ENCODE measurements at regions of chr6 and their contacts with region 1.

Region 1: GRCh38 chr6:25992413-25993037 is 29.9 kb downstream of the TRIM38 start:
- DNase-seq: peak; percentile 96
- ATAC-seq: peak; percentile 96
- H3K4me3 Mint-ChIP-seq: peak overlapping the region; percentile 91
- H3K27ac Mint-ChIP-seq: peak overlapping the region; percentile 97
- H3K4me1 Mint-ChIP-seq: peaks cover 25% of the 10 kb centered on the region
- H3K27me3 Mint-ChIP-seq: no peaks in the 10 kb centered on the region
- CTCF ChIP-seq: peak; percentile 98

Region 2: GRCh38 chr6:25899123-25899522 is 93.4 kb before region 1 on chr6:
- CTCF ChIA-PET with region 1: interaction called, 10 read pairs
- POLR2A ChIA-PET with region 1: no interaction called
- intact Hi-C with region 1: no loop called
- DNase-seq: no peak
- ATAC-seq: no peak
- H3K4me3 Mint-ChIP-seq: no peak overlapping the region
- H3K27ac Mint-ChIP-seq: no peak overlapping the region
- H3K4me1 Mint-ChIP-seq: peaks cover 2% of the 10 kb centered on the region
- H3K27me3 Mint-ChIP-seq: peaks cover 5% of the 10 kb centered on the region
- CTCF ChIP-seq: no peak

Region 3: DNA sequence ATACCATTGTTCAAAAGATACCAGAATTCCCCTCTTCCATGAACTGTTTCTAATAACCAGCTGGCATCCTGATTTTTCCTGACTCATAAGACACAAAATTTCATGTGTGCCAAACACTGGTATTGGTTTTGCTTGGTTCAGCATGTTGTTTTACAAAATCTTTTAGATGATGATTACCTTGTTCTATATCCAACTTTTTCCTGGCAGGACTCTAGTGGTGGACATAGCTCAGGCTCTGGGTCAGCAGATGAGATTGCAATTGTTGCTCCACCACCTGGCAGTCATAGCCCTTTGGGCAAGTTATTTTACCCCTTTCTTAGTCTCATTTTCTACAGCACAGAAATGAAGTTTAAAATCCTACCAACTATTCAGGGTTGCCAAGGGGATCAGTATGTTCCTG is 23.8 kb before region 1 on chr6:
- CTCF ChIA-PET with region 1: interaction called, 29 read pairs
- POLR2A ChIA-PET with region 1: interaction called, 10 read pairs
- intact Hi-C with region 1: no loop called
- DNase-seq: no peak
- ATAC-seq: no peak
- H3K4me3 Mint-ChIP-seq: no peak overlapping the region
- H3K27ac Mint-ChIP-seq: peak overlapping the region; percentile 36
- H3K4me1 Mint-ChIP-seq: peaks cover 61% of the 10 kb centered on the region
- H3K27me3 Mint-ChIP-seq: no peaks in the 10 kb centered on the region
- CTCF ChIP-seq: no peak

Region 4: GRCh38 chr6:25981568-25982263 is 10.8 kb before region 1 on chr6:
- CTCF ChIA-PET with region 1: interaction called, 20 read pairs
- POLR2A ChIA-PET with region 1: interaction called, 14 read pairs
- intact Hi-C with region 1: no loop called
- DNase-seq: no peak
- ATAC-seq: no peak
- H3K4me3 Mint-ChIP-seq: no peak overlapping the region
- H3K27ac Mint-ChIP-seq: peak overlapping the region; percentile 28
- H3K4me1 Mint-ChIP-seq: peaks cover 18% of the 10 kb centered on the region
- H3K27me3 Mint-ChIP-seq: no peaks in the 10 kb centered on the region
- CTCF ChIP-seq: no peak

Region 5: DNA sequence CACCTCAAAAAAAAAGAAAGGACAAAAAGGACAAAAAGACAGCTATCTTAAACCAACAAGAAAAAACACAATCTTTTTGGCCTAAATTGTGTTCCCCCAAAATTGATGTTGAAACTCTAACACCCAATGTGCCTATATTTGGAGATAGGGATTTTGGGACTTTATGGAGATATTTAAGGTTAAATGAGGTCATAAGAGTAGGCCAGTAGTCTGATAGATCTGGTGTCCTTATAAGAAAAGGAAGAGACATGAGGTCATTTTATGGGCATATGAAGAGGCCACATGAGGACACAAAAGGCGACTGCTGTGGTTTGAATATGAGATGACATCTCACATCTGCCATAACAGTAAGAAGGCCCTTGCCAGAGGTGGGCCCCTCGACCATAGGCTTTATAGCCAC is 19.5 kb after region 1 on chr6:
- CTCF ChIA-PET with region 1: interaction called, 118 read pairs
- POLR2A ChIA-PET with region 1: interaction called, 95 read pairs
- intact Hi-C with region 1: no loop called
- DNase-seq: no peak
- ATAC-seq: no peak
- H3K4me3 Mint-ChIP-seq: no peak overlapping the region
- H3K27ac Mint-ChIP-seq: no peak overlapping the region
- H3K4me1 Mint-ChIP-seq: peaks cover 4% of the 10 kb centered on the region
- H3K27me3 Mint-ChIP-seq: no peaks in the 10 kb centered on the region
- CTCF ChIP-seq: no peak

Region 6: DNA sequence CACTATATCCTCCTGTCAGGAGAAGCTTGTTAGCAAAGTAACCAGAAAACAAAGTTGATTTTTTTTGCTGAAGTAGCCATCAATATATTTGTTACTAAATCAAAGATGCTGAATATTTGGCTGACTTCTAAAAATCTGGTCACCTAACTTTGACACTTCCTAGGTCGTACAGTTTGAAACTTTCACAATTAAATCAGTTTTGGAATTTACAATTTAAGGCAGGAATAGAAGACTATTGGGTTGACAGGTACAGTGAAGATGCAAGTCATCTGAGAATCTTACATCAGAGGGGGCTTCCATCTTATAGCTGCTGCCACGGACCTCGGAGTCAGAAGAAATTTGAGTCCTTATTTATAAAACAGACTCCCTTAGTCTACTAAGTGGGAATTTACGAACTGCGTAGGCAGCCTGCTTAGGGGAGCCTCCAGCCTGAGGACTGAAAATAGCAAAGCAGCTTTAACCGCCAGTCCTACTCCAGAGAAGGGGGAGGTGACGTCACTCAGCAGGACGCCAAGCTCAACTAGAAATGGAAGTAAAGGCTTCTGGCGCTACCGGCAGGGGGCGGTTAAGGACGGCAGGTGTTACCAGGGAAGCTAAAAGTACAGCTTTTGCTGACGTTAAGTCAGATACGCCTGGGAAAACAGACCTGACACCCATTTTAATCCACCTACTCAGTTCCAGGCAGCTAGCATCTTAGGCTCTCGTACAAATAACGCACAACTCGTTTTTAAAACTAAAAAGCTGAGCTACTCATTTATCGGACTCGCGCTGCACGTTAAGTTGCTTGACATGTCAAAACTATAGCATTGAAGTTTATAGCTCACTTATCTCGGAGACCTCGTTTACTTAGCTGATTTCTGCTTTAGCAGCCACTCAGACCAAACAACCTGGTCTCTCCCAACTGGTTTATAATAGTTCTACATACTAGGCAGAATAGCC is 33.6 kb after region 1 on chr6:
- CTCF ChIA-PET with region 1: interaction called, 25 read pairs
- POLR2A ChIA-PET with region 1: interaction called, 95 read pairs
- intact Hi-C with region 1: no loop called
- DNase-seq: peak; percentile 97
- ATAC-seq: peak; percentile 41
- H3K4me3 Mint-ChIP-seq: peak overlapping the region; percentile 77
- H3K27ac Mint-ChIP-seq: peak overlapping the region; percentile 95
- H3K4me1 Mint-ChIP-seq: peaks cover 51% of the 10 kb centered on the region
- H3K27me3 Mint-ChIP-seq: peaks cover 2% of the 10 kb centered on the region
- CTCF ChIP-seq: peak; percentile 75

Measured in activated CD8-positive, alpha-beta T cell treated with anti-CD3 and anti-CD28 coated beads for 36 hours (primary cell).